ENCODE measurements at regions of chrX and their contacts with region 1.

Region 1: GRCh38 chrX:69538321-69538876 is 34.3 kb downstream of the NALF2 start:
- DNase-seq: peak; percentile 72
- ATAC-seq: peak; percentile 89
- H3K4me3 ChIP-seq: peak overlapping the region in 3 of 5 experiments; percentile 16 to 44 (median 21)
- H3K4me3 Mint-ChIP-seq: peak overlapping the region; percentile 64
- H3K27ac ChIP-seq: no peak overlapping the region
- H3K27ac Mint-ChIP-seq: no peak overlapping the region
- H3K4me1 ChIP-seq: peaks cover 17 to 18% of the 10 kb centered on the region in 2 donors
- H3K4me1 Mint-ChIP-seq: peaks cover 19% of the 10 kb centered on the region
- H3K27me3 ChIP-seq: no peaks in the 10 kb centered on the region
- H3K27me3 Mint-ChIP-seq: peaks cover 6% of the 10 kb centered on the region
- CTCF ChIP-seq: peak; percentile 65

Region 2: DNA sequence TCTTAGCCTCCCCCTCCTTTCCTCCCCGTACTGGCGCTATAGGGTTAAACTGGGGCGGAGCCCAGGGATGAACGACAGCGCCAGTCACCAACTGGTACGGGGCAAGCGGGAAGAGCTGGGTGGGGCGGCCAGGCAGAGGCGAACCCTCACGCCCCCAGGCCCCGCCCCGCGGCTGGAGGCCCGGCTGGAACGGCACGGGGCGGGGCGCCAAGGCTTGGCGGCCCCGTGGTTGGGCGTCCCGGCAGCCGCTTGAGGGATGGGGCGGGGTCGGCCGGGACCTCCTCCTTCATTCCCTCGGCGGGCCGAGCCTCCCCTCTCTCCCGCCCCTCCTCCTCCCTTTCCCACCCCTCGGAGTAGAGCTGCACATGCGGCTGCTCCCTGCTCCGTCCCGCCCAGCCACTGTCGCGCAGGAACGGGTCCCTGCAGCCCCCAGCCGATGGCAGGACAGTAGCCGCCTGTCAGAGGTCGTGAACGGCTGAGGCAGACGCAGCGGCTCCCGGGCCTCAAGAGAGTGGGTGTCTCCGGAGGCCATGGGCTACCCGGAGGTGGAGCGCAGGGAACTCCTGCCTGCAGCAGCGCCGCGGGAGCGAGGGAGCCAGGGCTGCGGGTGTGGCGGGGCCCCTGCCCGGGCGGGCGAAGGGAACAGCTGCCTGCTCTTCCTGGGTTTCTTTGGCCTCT is 77.5 kb after region 1 on chrX and contains the start of gene EDA:
- CTCF ChIA-PET with region 1: interaction called, 15 read pairs
- POLR2A ChIA-PET with region 1: no interaction called
- intact Hi-C with region 1: loop called (anchors 2 kb)
- DNase-seq: peak; percentile 40
- ATAC-seq: peak; percentile 94
- H3K4me3 ChIP-seq: peak within 1 kb of the TSS in 3 of 5 experiments; percentile 32 to 43 (median 33)
- H3K4me3 Mint-ChIP-seq: peak within 1 kb of the TSS; percentile 84
- H3K27ac ChIP-seq: no peak within 1 kb of the TSS
- H3K27ac Mint-ChIP-seq: peak within 1 kb of the TSS; percentile 46
- H3K4me1 ChIP-seq: peaks cover 0 to 7% of the 10 kb centered on the region in 2 donors
- H3K4me1 Mint-ChIP-seq: peaks cover 5% of the 10 kb centered on the region
- H3K27me3 ChIP-seq: peaks cover 0 to 16% (median 6%) of the 10 kb centered on the region in 4 experiments
- H3K27me3 Mint-ChIP-seq: peaks cover 28% of the 10 kb centered on the region
- CTCF ChIP-seq: no peak
- total RNA-seq, gene EDA: 0.24 and 1.2 TPM in 2 replicates

Region 3: GRCh38 chrX:70030301-70030767 is 491.9 kb after region 1 on chrX:
- CTCF ChIA-PET with region 1: interaction called, 9 read pairs
- POLR2A ChIA-PET with region 1: no interaction called
- intact Hi-C with region 1: loop called (anchors 5 kb)
- DNase-seq: peak; percentile 28
- ATAC-seq: no peak
- H3K4me3 ChIP-seq: no peak overlapping the region
- H3K4me3 Mint-ChIP-seq: no peak overlapping the region
- H3K27ac ChIP-seq: no peak overlapping the region
- H3K27ac Mint-ChIP-seq: no peak overlapping the region
- H3K4me1 ChIP-seq: no peaks in the 10 kb centered on the region
- H3K4me1 Mint-ChIP-seq: no peaks in the 10 kb centered on the region
- H3K27me3 ChIP-seq: no peaks in the 10 kb centered on the region
- H3K27me3 Mint-ChIP-seq: peaks cover 7% of the 10 kb centered on the region
- CTCF ChIP-seq: peak; percentile 34

Region 4: GRCh38 chrX:70096052-70096451 is 557.7 kb after region 1 on chrX:
- CTCF ChIA-PET with region 1: interaction called, 14 read pairs
- POLR2A ChIA-PET with region 1: no interaction called
- intact Hi-C with region 1: no loop called
- DNase-seq: no peak
- ATAC-seq: no peak
- H3K4me3 ChIP-seq: no peak overlapping the region
- H3K4me3 Mint-ChIP-seq: no peak overlapping the region
- H3K27ac ChIP-seq: no peak overlapping the region
- H3K27ac Mint-ChIP-seq: no peak overlapping the region
- H3K4me1 ChIP-seq: no peaks in the 10 kb centered on the region
- H3K4me1 Mint-ChIP-seq: no peaks in the 10 kb centered on the region
- H3K27me3 ChIP-seq: peaks cover 0 to 7% (median 0%) of the 10 kb centered on the region in 4 experiments
- H3K27me3 Mint-ChIP-seq: peaks cover 9% of the 10 kb centered on the region
- CTCF ChIP-seq: no peak

Measured in B cell (primary cell).